ENCODE measurements at regions of chr9 and their contacts with region 1.

Region 1: GRCh38 chr9:134544388-134545214 is 97.0 kb upstream of the COL5A1 start:
- DNase-seq: peak in 1 of 2 donors; percentile 74
- ATAC-seq: no peak
- H3K4me3 ChIP-seq: no peak overlapping the region
- H3K27ac ChIP-seq: peak overlapping the region in 1 of 2 donors; percentile 2
- H3K4me1 ChIP-seq: no peaks in the 10 kb centered on the region
- H3K27me3 ChIP-seq: no peaks in the 10 kb centered on the region

Region 2: DNA sequence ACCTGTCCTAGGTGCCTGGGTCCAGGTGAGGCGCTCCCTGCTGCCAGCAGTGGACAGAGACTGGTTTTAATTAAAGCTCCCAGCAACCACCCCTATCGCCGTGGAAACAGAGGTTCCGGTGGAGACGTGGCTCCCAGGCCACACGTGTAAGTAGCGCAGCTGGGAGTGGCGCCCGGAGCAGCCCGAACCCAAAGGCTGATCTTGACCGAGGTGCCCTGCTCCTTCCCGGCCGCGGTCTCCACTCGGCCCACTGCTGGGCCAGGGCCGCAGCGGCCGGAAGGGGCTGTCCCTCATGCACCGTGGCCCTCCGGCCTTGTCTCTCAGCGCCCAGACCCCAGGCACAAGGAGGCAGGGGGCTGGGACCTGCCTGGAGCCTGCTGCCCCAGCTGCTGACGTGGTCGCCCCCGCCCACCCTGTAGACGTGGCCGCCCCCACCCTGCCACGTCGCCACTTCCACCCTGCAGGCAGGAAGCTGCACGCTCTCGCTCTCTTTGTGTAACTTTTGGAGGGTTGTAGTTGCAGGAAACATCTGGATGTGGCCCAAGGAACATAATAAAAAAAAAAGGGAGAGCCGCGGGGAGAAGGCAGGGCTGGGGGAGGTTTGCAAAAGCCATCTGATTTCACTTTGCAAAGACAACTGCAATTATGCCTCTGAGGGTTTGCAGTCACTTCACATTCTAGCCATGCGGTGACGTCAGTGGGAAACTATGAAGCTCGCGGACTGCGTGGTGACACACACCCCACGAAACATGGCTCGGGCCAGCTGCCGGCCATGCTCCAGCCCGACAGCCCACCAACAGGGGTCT is 88.5 kb before region 1 on chr9:
- intact Hi-C with region 1: loop called in 1 of 2 experiments (anchors 5 kb)
- DNase-seq: peak; percentile 93 to 94
- ATAC-seq: peak; percentile 90
- H3K4me3 ChIP-seq: no peak overlapping the region
- H3K27ac ChIP-seq: peak overlapping the region; percentile 64 to 88
- H3K4me1 ChIP-seq: peaks cover 0 to 4% of the 10 kb centered on the region in 2 donors
- H3K27me3 ChIP-seq: no peaks in the 10 kb centered on the region

Region 3: GRCh38 chr9:134475011-134475790 is 69.4 kb before region 1 on chr9:
- intact Hi-C with region 1: loop called in 1 of 2 experiments (anchors 5 kb)
- DNase-seq: peak; percentile 89 to 90
- ATAC-seq: peak; percentile 59
- H3K4me3 ChIP-seq: no peak overlapping the region
- H3K27ac ChIP-seq: peak overlapping the region in 1 of 2 donors; percentile 45
- H3K4me1 ChIP-seq: peaks cover 0 to 4% of the 10 kb centered on the region in 2 donors
- H3K27me3 ChIP-seq: no peaks in the 10 kb centered on the region

Region 4: DNA sequence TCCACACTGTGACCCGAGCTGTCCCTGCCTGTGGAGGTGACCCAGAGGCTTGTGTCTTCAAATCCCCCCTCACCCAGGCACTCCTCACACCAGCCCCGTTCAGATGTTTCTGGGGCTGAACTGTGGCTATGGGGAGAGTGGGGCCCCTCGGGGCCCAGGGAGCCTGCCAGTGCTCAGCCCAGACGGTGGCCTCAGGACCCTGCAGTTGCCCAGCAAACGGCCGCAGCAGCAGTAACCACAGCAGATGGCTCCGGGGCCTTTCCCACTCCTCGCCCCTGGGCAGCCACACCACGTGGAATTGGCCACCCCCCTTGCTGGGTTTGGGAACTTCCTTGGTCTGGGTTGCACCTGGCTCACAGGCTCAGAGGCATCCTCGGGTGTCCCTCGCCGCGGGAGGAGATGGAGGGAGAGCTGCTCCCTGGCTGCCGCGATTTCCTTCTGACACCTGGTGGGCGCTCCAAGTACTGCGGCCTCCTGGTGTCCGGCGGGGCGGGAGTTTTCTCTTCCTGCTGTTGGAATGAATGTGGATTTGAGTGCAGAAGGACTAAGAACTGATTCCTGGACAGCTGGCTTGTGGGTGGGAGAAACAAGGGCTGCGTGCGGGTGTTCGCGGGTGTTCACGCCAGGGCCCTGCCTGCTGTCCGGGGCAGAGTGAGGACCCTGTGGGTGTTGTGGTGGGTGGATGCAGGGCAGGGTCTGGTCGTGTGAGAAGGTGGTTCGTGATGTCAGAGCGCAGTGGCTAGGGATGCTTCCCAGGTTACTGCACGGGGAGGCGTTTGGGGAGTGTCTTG is 194.5 kb after region 1 on chr9:
- intact Hi-C with region 1: no loop called
- DNase-seq: peak; percentile 73 to 92
- ATAC-seq: peak; percentile 78
- H3K4me3 ChIP-seq: no peak overlapping the region
- H3K27ac ChIP-seq: no peak overlapping the region
- H3K4me1 ChIP-seq: no peaks in the 10 kb centered on the region
- H3K27me3 ChIP-seq: no peaks in the 10 kb centered on the region